BJ (cell line): ENCODE measurements at regions of chr4 and their contacts with region 1.

Region 1: DNA sequence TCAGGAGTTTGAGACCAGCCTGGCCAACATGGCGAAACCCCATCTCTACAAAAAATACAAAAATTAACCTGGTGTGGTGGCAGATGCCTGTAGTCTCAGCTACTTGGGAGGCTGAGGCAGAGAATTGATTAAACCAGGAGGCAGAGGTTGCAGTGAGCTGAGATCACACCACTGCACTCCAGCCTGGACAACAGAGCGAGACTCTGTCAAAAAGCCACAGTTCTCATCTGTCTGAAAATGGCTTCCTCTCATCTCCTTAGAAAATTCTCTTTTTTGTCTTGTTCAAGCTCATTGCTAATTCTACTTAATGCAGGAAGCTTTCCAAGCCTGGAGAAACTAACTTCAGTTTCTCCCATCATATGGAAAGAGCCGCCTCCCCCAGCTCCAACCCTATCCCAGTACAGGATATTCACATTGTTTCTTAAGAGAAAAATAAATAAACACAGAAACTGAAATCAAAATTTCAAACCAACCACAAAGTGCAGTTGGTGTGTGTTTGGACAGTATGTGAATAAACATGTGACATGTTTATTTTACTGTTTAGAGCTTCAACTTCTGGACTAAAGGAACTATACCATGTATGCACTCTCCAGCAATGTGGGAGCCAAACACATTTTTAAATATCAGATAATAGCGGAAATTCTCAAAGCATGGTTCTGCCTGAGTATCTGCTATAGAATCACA is 55.0 kb upstream of the GAB1 start:
- DNase-seq: no peak
- H3K4me3 ChIP-seq: no peak overlapping the region
- H3K27me3 ChIP-seq: no peaks in the 10 kb centered on the region
- CTCF ChIP-seq: no peak

Region 2: GRCh38 chr4:143163618-143164017 is 118.0 kb before region 1 on chr4:
- CTCF ChIA-PET with region 1: no interaction called
- POLR2A ChIA-PET with region 1: no interaction called
- DNase-seq: no peak
- H3K4me3 ChIP-seq: no peak overlapping the region
- H3K27me3 ChIP-seq: no peaks in the 10 kb centered on the region
- CTCF ChIP-seq: no peak

Region 3: GRCh38 chr4:143270256-143270838 is 11.3 kb before region 1 on chr4:
- CTCF ChIA-PET with region 1: interaction called, 10 read pairs
- POLR2A ChIA-PET with region 1: no interaction called
- DNase-seq: peak; percentile 26
- H3K4me3 ChIP-seq: no peak overlapping the region
- H3K27me3 ChIP-seq: no peaks in the 10 kb centered on the region
- CTCF ChIP-seq: no peak